Caco-2 (cell line): ENCODE measurements at regions of chr1 and their contacts with region 1.

Region 1: GRCh38 chr1:181166377-181167196 is 78.1 kb downstream of the IER5 start:
- DNase-seq: peak; percentile 70 to 74
- H3K4me3 ChIP-seq: no peak overlapping the region
- H3K4me3 Mint-ChIP-seq: peak overlapping the region; percentile 52
- H3K27ac Mint-ChIP-seq: no peak overlapping the region
- H3K4me1 ChIP-seq: no peaks in the 10 kb centered on the region
- H3K4me1 Mint-ChIP-seq: no peaks in the 10 kb centered on the region
- H3K27me3 ChIP-seq: no peaks in the 10 kb centered on the region
- H3K27me3 Mint-ChIP-seq: no peaks in the 10 kb centered on the region
- CTCF ChIP-seq: peak; percentile 70 to 81

Region 2: GRCh38 chr1:180515864-180516388 is 650.7 kb before region 1 on chr1:
- CTCF ChIA-PET with region 1: no interaction called
- POLR2A ChIA-PET with region 1: no interaction called
- intact Hi-C with region 1: loop called (anchors 5 kb)
- DNase-seq: peak; percentile 68 to 80
- H3K4me3 ChIP-seq: no peak overlapping the region
- H3K4me3 Mint-ChIP-seq: no peak overlapping the region
- H3K27ac Mint-ChIP-seq: no peak overlapping the region
- H3K4me1 ChIP-seq: 0 out of 2 replicates have a peak, but pooled peaks cover 7% of the 10 kb centered on the region
- H3K4me1 Mint-ChIP-seq: peaks cover 16% of the 10 kb centered on the region
- H3K27me3 ChIP-seq: no peaks in the 10 kb centered on the region
- H3K27me3 Mint-ChIP-seq: no peaks in the 10 kb centered on the region
- CTCF ChIP-seq: peak; percentile 80 to 82

Region 3: DNA sequence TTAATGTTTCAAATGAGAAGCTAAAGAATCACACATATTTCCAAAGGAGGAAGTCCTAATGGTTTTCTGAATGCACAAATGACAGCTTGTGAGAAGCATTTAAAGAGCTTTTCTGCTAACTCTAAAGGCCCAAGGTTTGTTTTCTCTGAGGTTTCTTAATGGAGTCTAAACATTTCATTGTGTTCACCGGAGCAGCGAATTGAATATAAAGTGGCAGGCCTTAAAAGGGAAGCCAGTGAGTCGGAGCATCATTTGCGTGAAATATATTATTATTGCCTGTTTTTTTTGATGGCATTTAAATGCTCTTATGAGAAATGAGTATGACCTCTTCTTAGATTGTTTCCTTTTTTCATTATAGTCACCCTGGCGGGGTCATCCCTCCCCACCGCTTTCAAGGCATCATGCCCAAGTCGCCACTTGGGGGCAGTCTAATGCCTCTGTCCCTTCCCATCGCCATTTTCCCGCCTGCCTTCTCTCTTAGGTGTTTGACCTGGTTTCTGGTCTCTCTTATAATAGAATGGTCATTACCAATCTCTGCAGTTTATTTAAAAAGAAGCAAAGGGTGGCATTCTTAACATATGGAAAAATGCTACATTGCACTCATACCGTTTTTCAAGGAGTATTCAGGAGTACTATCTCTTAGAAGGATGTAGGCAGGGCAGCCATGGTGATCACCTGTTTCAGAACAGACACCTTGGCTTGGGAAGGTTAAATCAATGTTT is 633.2 kb before region 1 on chr1:
- CTCF ChIA-PET with region 1: no interaction called
- POLR2A ChIA-PET with region 1: no interaction called
- intact Hi-C with region 1: loop called (anchors 1 kb)
- DNase-seq: peak; percentile 59 to 77
- H3K4me3 ChIP-seq: no peak overlapping the region
- H3K4me3 Mint-ChIP-seq: no peak overlapping the region
- H3K27ac Mint-ChIP-seq: no peak overlapping the region
- H3K4me1 ChIP-seq: peaks cover 6% of the 10 kb centered on the region; the same call in 1 of the 2 replicates
- H3K4me1 Mint-ChIP-seq: peaks cover 10% of the 10 kb centered on the region
- H3K27me3 ChIP-seq: no peaks in the 10 kb centered on the region
- H3K27me3 Mint-ChIP-seq: no peaks in the 10 kb centered on the region
- CTCF ChIP-seq: peak; percentile 72 to 74

Region 4: GRCh38 chr1:180945551-180945950 is 221.0 kb before region 1 on chr1:
- CTCF ChIA-PET with region 1: no interaction called
- POLR2A ChIA-PET with region 1: no interaction called
- intact Hi-C with region 1: loop called (anchors 2 kb)
- DNase-seq: no peak
- H3K4me3 ChIP-seq: no peak overlapping the region
- H3K4me3 Mint-ChIP-seq: no peak overlapping the region
- H3K27ac Mint-ChIP-seq: no peak overlapping the region
- H3K4me1 ChIP-seq: no peaks in the 10 kb centered on the region
- H3K4me1 Mint-ChIP-seq: no peaks in the 10 kb centered on the region
- H3K27me3 ChIP-seq: no peaks in the 10 kb centered on the region
- H3K27me3 Mint-ChIP-seq: no peaks in the 10 kb centered on the region
- CTCF ChIP-seq: no peak

Region 5: DNA sequence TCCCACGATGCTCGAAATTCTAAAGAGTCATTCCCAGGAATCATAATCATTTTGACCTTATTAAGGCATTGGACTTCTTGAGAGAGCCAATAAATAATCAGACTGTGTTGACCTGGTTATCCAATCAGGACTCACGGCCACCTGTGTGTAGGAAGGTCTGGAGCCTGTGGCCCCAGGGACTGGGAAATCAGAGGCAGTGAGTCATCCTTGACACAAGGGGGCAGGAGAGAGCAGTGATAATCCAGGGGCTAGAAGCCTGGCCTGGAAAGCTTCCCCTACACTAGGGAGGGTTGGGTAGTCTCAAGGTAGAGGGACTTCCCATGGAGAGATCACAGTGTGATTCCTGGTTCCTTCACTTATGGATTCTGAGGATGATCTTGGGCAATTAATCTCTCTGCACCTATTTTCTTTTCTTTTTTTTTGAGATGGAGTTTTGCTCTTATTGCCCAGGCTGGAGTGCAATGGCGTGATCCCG is 128.2 kb before region 1 on chr1:
- CTCF ChIA-PET with region 1: no interaction called
- POLR2A ChIA-PET with region 1: no interaction called
- intact Hi-C with region 1: loop called (anchors 1 kb)
- DNase-seq: peak; percentile 79 to 85
- H3K4me3 ChIP-seq: no peak overlapping the region
- H3K4me3 Mint-ChIP-seq: no peak overlapping the region
- H3K27ac Mint-ChIP-seq: no peak overlapping the region
- H3K4me1 ChIP-seq: peaks cover 9% of the 10 kb centered on the region
- H3K4me1 Mint-ChIP-seq: peaks cover 13% of the 10 kb centered on the region
- H3K27me3 ChIP-seq: no peaks in the 10 kb centered on the region
- H3K27me3 Mint-ChIP-seq: no peaks in the 10 kb centered on the region
- CTCF ChIP-seq: peak; percentile 67 to 79

Region 6: DNA sequence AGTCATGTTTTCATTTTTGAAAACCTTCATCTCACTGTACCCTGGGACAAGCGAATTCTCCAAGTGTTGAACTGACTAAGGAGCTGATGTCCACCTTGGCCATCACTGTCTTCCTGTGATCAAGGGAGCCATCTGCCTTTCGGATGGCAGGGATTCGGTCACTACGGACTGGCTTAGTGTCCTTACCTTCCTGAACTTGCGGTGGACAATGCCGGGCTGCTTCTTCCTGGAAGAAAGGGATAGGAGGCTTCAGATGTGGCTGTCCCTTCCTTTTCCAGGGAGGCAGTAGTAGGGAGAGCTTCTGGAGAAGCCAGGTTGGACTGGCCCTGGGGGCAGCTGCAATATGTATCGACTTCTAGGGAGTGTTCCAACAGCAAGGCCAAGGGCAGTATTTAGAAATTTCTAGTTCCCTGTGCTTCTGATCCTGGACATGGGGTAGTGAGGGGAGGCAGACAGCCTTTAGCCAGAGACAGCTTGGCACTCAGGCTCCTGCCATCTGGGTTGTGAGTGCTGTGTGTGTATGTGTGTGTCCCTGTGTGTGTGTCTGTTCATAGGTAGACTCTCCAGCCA is 36.5 kb after region 1 on chr1:
- CTCF ChIA-PET with region 1: no interaction called
- POLR2A ChIA-PET with region 1: no interaction called
- intact Hi-C with region 1: no loop called
- DNase-seq: no peak
- H3K4me3 ChIP-seq: no peak overlapping the region
- H3K4me3 Mint-ChIP-seq: no peak overlapping the region
- H3K27ac Mint-ChIP-seq: no peak overlapping the region
- H3K4me1 ChIP-seq: no peaks in the 10 kb centered on the region
- H3K4me1 Mint-ChIP-seq: no peaks in the 10 kb centered on the region
- H3K27me3 ChIP-seq: no peaks in the 10 kb centered on the region
- H3K27me3 Mint-ChIP-seq: peaks cover 20% of the 10 kb centered on the region
- CTCF ChIP-seq: no peak

Region 7: GRCh38 chr1:181216591-181216994 is 50.0 kb after region 1 on chr1:
- CTCF ChIA-PET with region 1: no interaction called
- POLR2A ChIA-PET with region 1: no interaction called
- intact Hi-C with region 1: no loop called
- DNase-seq: peak in 1 of 2 experiments; percentile 10
- H3K4me3 ChIP-seq: no peak overlapping the region
- H3K4me3 Mint-ChIP-seq: no peak overlapping the region
- H3K27ac Mint-ChIP-seq: no peak overlapping the region
- H3K4me1 ChIP-seq: no peaks in the 10 kb centered on the region
- H3K4me1 Mint-ChIP-seq: no peaks in the 10 kb centered on the region
- H3K27me3 ChIP-seq: no peaks in the 10 kb centered on the region
- H3K27me3 Mint-ChIP-seq: peaks cover 7% of the 10 kb centered on the region
- CTCF ChIP-seq: no peak